ENCODE measurements at regions of chr5 and their contacts with region 1.

Region 1: GRCh38 chr5:129904102-129904666 is at the start of gene CHSY3:
- DNase-seq: peak; percentile 87 to 92
- ATAC-seq: peak; percentile 92 to 97 (median 96)
- H3K4me3 ChIP-seq: peak within 1 kb of the TSS; percentile 74
- H3K27ac ChIP-seq: peak within 1 kb of the TSS; percentile 78
- H3K4me1 ChIP-seq: peaks cover 13% of the 10 kb centered on the region
- H3K27me3 ChIP-seq: no peaks in the 10 kb centered on the region
- CTCF ChIP-seq: peak; percentile 13
- total RNA-seq, gene CHSY3: 0.49 to 2.9 (median 1.7) TPM

Region 2: DNA sequence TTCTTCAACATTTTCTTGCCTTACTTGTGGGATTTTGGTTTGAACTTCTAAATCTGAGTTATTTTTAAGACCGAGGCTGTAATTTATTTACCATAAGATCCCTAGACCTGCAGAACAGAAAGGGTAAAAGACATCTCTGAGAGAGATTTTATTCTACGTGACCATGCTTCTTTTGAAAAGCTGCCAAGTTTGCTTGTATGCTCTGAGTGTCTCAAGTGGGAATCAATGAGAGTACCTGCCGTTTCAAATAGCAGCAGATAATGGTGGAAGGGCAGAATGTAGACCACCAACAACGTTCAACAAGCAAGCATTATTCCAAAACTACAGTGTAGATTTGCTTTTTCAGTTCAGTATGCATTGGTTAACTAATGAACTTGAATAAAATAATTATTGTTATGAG is 264.9 kb before region 1 on chr5:
- intact Hi-C with region 1: no loop called
- DNase-seq: no peak
- ATAC-seq: no peak
- H3K4me3 ChIP-seq: no peak overlapping the region
- H3K27ac ChIP-seq: no peak overlapping the region
- H3K4me1 ChIP-seq: no peaks in the 10 kb centered on the region
- H3K27me3 ChIP-seq: no peaks in the 10 kb centered on the region
- CTCF ChIP-seq: no peak

Region 3: DNA sequence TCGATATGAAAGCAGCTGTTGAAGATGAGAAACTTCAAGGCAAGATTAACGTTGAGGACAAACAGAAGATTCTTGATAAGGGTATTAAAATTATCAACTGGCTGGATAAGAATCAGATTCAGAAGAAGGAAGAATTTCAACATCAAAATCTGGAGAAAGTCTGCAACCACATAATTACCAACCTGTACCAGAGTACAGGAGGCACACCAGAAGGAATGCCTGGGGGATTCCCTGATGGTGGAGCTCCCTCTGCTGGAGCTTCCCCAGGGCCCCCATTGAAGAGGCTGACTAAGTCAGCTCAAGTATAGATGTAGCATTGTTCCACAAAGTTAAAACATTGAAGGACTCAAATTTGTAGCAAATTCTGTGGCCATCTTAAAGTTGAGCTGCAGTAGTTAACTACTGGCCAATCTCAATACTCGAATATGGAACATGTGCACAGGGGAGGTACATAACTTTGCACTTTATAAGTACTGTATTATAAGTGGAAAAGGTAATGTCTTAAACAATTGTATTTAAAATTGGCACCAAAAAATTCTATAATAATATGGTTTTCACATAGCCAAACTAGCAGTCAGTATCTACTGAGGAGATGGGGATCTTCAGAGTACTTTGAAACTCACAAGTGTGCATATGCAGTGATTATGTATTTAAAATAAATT is 237.6 kb after region 1 on chr5:
- intact Hi-C with region 1: loop called (anchors 5 to 10 kb)
- DNase-seq: no peak
- ATAC-seq: peak in 2 of 4 donors; percentile 67 to 83
- H3K4me3 ChIP-seq: no peak overlapping the region
- H3K27ac ChIP-seq: no peak overlapping the region
- H3K4me1 ChIP-seq: no peaks in the 10 kb centered on the region
- H3K27me3 ChIP-seq: no peaks in the 10 kb centered on the region
- CTCF ChIP-seq: peak; percentile 61

Region 4: DNA sequence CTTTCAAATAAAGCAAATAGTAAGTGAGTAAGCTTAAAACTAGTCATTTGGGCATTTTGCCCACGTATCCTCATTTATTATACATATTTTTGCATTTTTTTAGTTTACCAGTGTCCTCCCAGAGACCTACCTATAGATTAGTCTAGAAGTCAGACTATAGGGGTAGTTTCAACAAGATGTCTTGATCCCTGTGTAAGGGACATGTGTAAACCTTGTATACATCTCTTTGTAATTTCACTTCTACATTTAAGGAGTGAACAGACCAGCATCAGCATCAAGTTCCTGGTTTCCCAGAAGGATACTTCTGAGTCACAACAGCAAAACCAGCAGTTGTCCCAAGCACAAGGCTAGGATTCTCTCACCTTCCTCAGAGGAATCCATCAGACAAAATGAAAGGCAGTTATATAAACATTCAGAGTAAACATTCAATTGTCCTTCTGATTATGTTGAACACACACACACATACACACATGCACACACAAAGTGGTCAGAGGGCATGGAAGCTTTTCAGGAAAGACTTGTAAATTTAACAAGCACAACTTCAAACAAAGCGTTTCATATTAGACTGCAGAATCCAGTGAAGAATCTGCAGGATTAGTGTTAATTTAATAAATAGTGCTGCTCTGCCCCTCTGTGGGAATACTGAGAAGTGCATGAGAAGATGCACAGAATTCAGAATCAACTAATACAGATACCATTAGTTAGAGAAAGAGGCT is 1205.5 kb after region 1 on chr5:
- intact Hi-C with region 1: loop called (anchors 5 to 10 kb)
- DNase-seq: no peak
- ATAC-seq: peak in 1 of 4 donors; percentile 65
- H3K4me3 ChIP-seq: no peak overlapping the region
- H3K27ac ChIP-seq: no peak overlapping the region
- H3K4me1 ChIP-seq: no peaks in the 10 kb centered on the region
- H3K27me3 ChIP-seq: no peaks in the 10 kb centered on the region
- CTCF ChIP-seq: peak; percentile 69